ENCODE measurements at regions of chr10 and their contacts with region 1.

Region 1: GRCh38 chr10:128263891-128264688 is 137.9 kb upstream of the MKI67 start:
- DNase-seq: peak; percentile 27 to 80
- H3K4me3 ChIP-seq: no peak overlapping the region
- H3K27ac ChIP-seq: no peak overlapping the region
- H3K4me1 ChIP-seq: peaks cover 0 to 5% (median 0%) of the 10 kb centered on the region in 4 experiments; a peak in 3 of 7 replicates
- H3K27me3 ChIP-seq: no peaks in the 10 kb centered on the region; a peak in 2 of 7 replicates
- CTCF ChIP-seq: peak; percentile 64 to 72 (median 66)
- EP300 ChIP-seq: no peak
- POLR2A ChIP-seq: no peak
- RAD21 ChIP-seq: peak; percentile 61 to 62

Region 2: GRCh38 chr10:128280271-128280670 is 16.2 kb after region 1 on chr10:
- CTCF ChIA-PET with region 1: interaction called, 18 read pairs
- POLR2A ChIA-PET with region 1: no interaction called
- DNase-seq: no peak
- H3K4me3 ChIP-seq: no peak overlapping the region
- H3K27ac ChIP-seq: no peak overlapping the region
- H3K4me1 ChIP-seq: peaks cover 0 to 3% (median 0%) of the 10 kb centered on the region in 4 experiments; a peak in 1 of 7 replicates
- H3K27me3 ChIP-seq: peaks cover 0 to 6% (median 2%) of the 10 kb centered on the region in 4 experiments; a peak in 4 of 7 replicates
- CTCF ChIP-seq: no peak
- EP300 ChIP-seq: no peak
- POLR2A ChIP-seq: no peak
- RAD21 ChIP-seq: no peak

Region 3: GRCh38 chr10:128324077-128324827 is 60.2 kb after region 1 on chr10:
- CTCF ChIA-PET with region 1: interaction called, 19 read pairs
- POLR2A ChIA-PET with region 1: no interaction called
- DNase-seq: peak; percentile 17 to 63
- H3K4me3 ChIP-seq: no peak overlapping the region
- H3K27ac ChIP-seq: no peak overlapping the region
- H3K4me1 ChIP-seq: no peaks in the 10 kb centered on the region
- H3K27me3 ChIP-seq: no peaks in the 10 kb centered on the region
- CTCF ChIP-seq: peak; percentile 52 to 55 (median 52)
- EP300 ChIP-seq: no peak
- POLR2A ChIP-seq: no peak
- RAD21 ChIP-seq: peak; percentile 85 to 88

Region 4: GRCh38 chr10:128393546-128393945 is 129.5 kb after region 1 on chr10:
- CTCF ChIA-PET with region 1: no interaction called
- POLR2A ChIA-PET with region 1: no interaction called
- DNase-seq: no peak
- H3K4me3 ChIP-seq: no peak overlapping the region
- H3K27ac ChIP-seq: no peak overlapping the region
- H3K4me1 ChIP-seq: no peaks in the 10 kb centered on the region; a peak in 1 of 7 replicates
- H3K27me3 ChIP-seq: no peaks in the 10 kb centered on the region
- CTCF ChIP-seq: no peak
- EP300 ChIP-seq: no peak
- POLR2A ChIP-seq: no peak
- RAD21 ChIP-seq: no peak

Region 5: DNA sequence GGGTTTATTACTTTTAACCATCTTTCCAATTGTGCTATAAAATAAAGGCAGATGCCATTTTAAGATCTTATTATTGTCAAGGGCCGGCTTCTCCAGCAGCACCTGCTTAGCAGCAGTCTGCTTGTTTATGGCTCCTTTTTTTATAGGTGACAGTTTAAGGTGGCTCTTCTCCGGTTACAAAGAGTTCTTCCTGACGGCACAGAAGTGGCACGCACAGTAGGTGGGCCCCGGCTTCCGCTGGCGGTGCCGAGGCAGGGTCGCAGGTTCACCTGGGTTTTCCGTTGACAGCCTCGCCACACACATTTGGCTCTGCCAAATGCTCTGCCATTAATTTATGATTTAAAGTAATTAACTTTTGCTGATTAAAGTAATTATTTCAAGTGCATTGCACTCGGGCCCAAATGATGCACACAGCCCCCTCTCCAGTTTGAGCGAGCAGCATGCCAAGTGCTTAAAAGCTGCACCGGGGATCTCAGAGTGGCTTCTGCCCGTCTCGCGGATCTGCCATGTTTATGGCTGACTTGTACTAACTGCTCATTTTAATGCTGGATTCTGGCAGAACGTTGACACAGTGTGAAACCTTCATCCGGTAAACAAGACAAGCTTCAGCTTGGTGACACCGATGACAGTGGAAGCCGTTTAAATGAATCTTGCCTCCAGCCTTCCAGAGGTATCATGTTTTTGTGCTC is 217.2 kb after region 1 on chr10:
- CTCF ChIA-PET with region 1: no interaction called
- POLR2A ChIA-PET with region 1: no interaction called
- DNase-seq: no peak
- H3K4me3 ChIP-seq: no peak overlapping the region
- H3K27ac ChIP-seq: no peak overlapping the region
- H3K4me1 ChIP-seq: 0 out of 7 replicates have a peak, but pooled peaks cover 0 to 3% (median 0%) of the 10 kb centered on the region in 4 experiments
- H3K27me3 ChIP-seq: no peaks in the 10 kb centered on the region
- CTCF ChIP-seq: no peak
- EP300 ChIP-seq: no peak
- POLR2A ChIP-seq: no peak
- RAD21 ChIP-seq: no peak

Region 6: DNA sequence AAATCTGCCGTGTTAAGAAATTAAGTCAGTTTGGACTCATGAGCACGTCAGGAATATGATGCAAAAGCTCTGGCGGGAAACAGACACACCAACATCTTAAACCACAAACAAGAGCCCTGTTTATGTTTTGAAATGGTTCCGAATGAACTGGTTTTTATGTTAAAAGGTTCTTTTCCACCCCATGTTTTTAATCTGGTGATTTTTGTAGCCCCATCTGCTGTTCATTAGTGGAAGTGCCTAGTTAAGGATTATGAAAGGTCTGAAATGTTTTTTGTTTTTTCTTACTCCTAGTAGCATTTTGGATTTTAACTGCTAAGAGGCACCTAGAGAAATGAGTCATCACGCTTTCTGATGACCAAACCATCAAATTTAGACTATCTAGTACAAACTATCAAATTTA is 266.2 kb after region 1 on chr10:
- CTCF ChIA-PET with region 1: interaction called, 17 read pairs
- POLR2A ChIA-PET with region 1: no interaction called
- DNase-seq: no peak
- H3K4me3 ChIP-seq: no peak overlapping the region
- H3K27ac ChIP-seq: no peak overlapping the region
- H3K4me1 ChIP-seq: peaks cover 0 to 16% (median 6%) of the 10 kb centered on the region in 4 experiments; a peak in 5 of 7 replicates
- H3K27me3 ChIP-seq: no peaks in the 10 kb centered on the region; a peak in 1 of 7 replicates
- CTCF ChIP-seq: peak in 2 of 3 experiments; percentile 29 to 50; a peak in 2 of 4 replicates
- EP300 ChIP-seq: no peak
- POLR2A ChIP-seq: no peak
- RAD21 ChIP-seq: peak; percentile 36 to 38

Measured in H1 (cell line).